Activated CD4-positive, alpha-beta T cell treated with anti-CD3 and anti-CD28 coated beads, Interleukin-2, amount 10 ng/mL, durations not matched to agents 24 days and 14 days (primary cell): ENCODE measurements at regions of chr10 and their contacts with region 1.

Region 1: GRCh38 chr10:121886997-121887622 is 40.7 kb downstream of the ATE1 start:
- DNase-seq: peak; percentile 83
- H3K4me3 Mint-ChIP-seq: no peak overlapping the region
- H3K27ac Mint-ChIP-seq: no peak overlapping the region
- H3K4me1 Mint-ChIP-seq: peaks cover 2% of the 10 kb centered on the region
- H3K27me3 Mint-ChIP-seq: no peaks in the 10 kb centered on the region

Region 2: DNA sequence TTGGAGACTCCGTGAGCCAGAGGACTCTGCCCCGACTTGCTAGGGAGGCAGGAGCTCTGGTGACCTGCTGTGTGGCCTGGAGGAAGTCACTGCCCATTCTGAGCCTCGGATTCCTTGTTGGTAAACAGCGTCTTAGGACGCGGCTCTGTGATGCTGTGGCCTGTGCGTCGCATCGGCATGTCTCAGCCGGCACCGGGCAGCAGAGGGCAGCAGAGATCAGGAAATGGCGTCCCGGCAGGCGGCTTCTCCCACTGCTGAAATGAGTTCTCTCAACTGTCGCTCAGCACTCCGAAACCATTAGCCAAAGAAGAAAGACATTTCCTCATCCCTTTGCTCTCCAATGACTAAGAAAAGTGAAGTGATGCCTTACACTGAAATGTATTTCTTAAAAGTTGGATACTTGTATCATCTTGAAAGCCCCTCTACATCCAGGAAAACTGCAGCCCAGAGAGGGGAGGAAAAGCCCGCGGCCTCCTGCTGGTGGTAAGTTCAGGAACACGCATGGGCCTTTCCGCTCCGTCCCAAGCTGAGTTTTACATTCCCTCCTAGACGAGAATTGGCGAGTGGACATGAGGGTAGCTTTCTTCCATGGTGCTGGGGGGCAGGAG is 944.2 kb before region 1 on chr10:
- intact Hi-C with region 1: loop called (anchors 2 kb)
- DNase-seq: peak; percentile 93
- H3K4me3 Mint-ChIP-seq: peak overlapping the region; percentile 21
- H3K27ac Mint-ChIP-seq: no peak overlapping the region
- H3K4me1 Mint-ChIP-seq: peaks cover 6% of the 10 kb centered on the region
- H3K27me3 Mint-ChIP-seq: peaks cover 2% of the 10 kb centered on the region

Region 3: GRCh38 chr10:121608469-121609190 is 278.5 kb before region 1 on chr10:
- intact Hi-C with region 1: loop called (anchors 10 kb)
- DNase-seq: peak; percentile 80
- H3K4me3 Mint-ChIP-seq: no peak overlapping the region
- H3K27ac Mint-ChIP-seq: no peak overlapping the region
- H3K4me1 Mint-ChIP-seq: no peaks in the 10 kb centered on the region
- H3K27me3 Mint-ChIP-seq: peaks cover 12% of the 10 kb centered on the region

Region 4: GRCh38 chr10:121823993-121824463 is 63.1 kb before region 1 on chr10:
- intact Hi-C with region 1: loop called (anchors 1 kb)
- DNase-seq: peak; percentile 61
- H3K4me3 Mint-ChIP-seq: no peak overlapping the region
- H3K27ac Mint-ChIP-seq: no peak overlapping the region
- H3K4me1 Mint-ChIP-seq: no peaks in the 10 kb centered on the region
- H3K27me3 Mint-ChIP-seq: no peaks in the 10 kb centered on the region

Region 5: DNA sequence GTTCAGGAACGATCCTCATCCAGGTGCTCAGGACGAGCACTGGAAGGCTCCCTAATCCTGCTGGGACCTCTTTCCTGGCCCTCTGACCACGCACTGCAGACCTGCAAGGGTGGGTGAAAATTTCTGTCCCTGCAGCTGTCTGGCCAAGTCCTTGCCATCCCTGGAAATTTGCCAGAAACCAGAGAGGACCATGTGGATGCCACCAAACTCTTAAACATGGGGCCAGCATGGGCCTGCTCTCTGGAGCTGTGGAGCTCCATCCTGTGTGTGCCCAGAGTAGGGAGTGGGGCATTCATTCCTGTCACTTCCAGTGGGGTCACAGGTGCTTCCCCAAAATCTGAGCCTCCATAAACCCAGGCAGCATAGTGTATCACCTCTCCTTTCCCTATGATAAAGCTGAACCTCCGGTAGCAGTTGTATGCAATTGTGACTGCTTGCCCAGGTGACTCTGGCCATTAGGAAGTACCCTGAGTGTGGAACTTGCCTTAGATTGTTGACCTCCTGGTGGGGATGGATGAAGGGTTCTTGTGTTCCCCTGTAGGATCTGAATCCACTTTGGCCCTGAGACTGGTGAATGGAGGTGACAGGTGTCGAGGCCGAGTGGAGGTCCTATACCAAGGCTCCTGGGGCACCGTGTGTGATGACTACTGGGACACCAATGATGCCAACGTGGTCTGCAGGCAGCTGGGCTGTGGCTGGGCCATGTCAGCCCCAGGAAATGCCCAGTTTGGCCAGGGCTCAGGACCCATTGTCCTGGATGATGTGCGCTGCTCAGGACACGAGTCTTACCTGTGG is 730.6 kb after region 1 on chr10:
- intact Hi-C with region 1: no loop called
- DNase-seq: no peak
- H3K4me3 Mint-ChIP-seq: no peak overlapping the region
- H3K27ac Mint-ChIP-seq: no peak overlapping the region
- H3K4me1 Mint-ChIP-seq: no peaks in the 10 kb centered on the region
- H3K27me3 Mint-ChIP-seq: no peaks in the 10 kb centered on the region